ENCODE measurements at regions of chr3 and their contacts with region 1.

Region 1: DNA sequence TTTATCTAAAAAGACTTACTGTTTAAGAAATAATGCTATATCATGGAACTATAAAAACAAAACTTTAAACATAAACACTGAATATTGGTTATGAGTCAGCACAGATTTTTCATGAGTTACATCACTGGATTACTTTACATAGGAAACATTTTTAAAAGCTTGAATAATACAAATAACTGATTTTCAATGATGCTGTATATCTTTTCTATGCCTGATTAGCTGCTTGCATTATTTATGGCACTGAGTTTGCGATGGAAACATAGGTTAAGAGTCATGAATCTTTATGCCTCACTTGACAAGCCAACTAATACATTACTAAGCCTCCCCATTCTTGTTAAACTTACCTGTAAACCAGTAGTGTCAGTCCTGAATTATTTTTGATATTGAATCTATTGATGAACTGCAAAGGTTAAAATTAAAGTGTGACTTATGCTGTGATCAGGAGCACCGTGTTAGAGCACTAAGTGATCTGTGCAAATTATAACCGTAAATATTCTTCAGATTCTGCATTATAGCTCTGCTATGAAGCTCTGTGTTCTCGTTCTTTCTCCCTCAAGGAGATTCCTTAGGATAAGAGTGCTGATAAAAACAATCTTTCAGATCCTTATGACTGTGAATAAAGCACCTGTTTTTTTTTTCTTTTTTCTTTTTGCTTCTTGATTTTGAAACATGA is 437.3 kb upstream of the BCHE start:
- DNase-seq: no peak
- H3K4me3 ChIP-seq: no peak overlapping the region
- H3K27ac ChIP-seq: no peak overlapping the region
- H3K4me1 ChIP-seq: no peaks in the 10 kb centered on the region
- H3K27me3 ChIP-seq: no peaks in the 10 kb centered on the region
- CTCF ChIP-seq: no peak
- POLR2A ChIP-seq: no peak

Region 2: DNA sequence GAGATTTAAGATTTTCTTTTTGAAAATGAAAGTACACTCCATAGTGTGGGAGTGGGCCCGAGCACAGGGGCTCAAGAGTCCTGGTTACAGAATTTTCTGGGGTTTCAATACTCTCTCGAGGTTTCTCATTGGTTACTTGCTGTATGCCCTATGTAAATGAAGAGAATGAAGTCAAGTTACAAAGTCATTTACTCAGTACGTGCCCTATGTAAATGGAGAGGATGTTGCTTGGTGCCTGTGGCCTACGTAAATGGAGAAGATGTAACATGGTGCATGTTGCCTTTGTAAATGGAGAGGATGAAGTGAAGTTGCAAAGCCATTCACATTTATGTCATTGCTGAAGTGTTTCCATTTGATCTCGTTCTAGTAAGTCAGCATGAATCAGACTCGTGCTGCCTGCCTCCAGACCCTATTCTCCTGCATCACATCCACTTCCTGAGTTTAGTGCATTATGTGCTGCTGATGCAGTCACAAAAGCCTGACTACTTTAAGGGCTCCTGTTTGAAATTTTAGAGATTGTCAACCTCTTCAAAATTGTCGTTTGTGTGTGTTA is 803.7 kb after region 1 on chr3:
- intact Hi-C with region 1: loop called (anchors 10 kb)
- DNase-seq: no peak
- H3K4me3 ChIP-seq: no peak overlapping the region
- H3K27ac ChIP-seq: no peak overlapping the region
- H3K4me1 ChIP-seq: no peaks in the 10 kb centered on the region
- H3K27me3 ChIP-seq: no peaks in the 10 kb centered on the region
- CTCF ChIP-seq: no peak
- POLR2A ChIP-seq: no peak

Measured in breast epithelium (tissue), 4 donors.